Activated naive CD4-positive, alpha-beta T cell treated with anti-CD3 and anti-CD28 coated beads, Interleukin-2, amount 10 ng/mL, durations not matched to agents 7 days and 5 days (primary cell): ENCODE measurements at regions of chr6 and their contacts with region 1.

Region 1: DNA sequence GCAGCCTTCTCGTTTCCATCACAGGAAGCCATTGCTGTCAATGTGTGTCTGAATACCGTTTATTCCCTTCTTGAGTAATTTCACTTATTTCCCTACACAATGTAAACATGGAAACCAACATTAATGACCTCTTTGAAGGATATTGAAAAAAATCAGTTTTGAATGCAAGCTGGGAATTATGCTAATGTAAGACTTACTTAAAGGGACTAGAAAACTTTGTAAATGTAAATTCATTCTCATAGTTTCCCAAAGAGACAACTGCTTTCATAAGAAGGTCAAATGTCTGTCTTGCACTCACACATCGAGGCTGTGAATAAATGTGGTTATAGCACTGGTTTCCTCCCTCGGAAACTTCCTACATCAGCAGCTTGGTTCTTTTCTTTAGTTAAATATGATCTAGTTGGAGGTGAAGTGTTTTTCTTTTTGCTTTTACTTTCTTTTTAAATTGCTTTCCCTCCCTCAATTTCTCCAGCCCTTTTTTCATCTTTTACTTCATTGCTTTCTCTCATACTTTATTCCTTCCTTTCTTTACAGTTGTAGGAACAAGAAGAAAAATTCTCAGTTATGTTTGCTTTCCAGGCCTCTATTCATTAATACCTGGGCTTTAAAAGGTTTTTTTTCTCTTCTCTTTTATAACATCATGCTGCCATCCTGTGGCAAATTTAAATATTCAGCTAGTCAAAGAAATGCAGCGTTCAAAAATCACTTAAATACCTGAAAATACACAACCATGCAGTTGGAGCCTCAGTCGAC is 108.3 kb downstream of the TNFAIP3 start:
- DNase-seq: peak; percentile 29
- H3K4me3 Mint-ChIP-seq: peak overlapping the region; percentile 67
- H3K27ac Mint-ChIP-seq: peak overlapping the region; percentile 95
- H3K4me1 Mint-ChIP-seq: peaks cover 40% of the 10 kb centered on the region
- H3K27me3 Mint-ChIP-seq: no peaks in the 10 kb centered on the region

Region 2: GRCh38 chr6:137823826-137824555 is 151.4 kb before region 1 on chr6:
- CTCF ChIA-PET with region 1: no interaction called
- DNase-seq: peak; percentile 84
- H3K4me3 Mint-ChIP-seq: peak overlapping the region; percentile 58
- H3K27ac Mint-ChIP-seq: peak overlapping the region; percentile 99
- H3K4me1 Mint-ChIP-seq: peaks cover 78% of the 10 kb centered on the region
- H3K27me3 Mint-ChIP-seq: no peaks in the 10 kb centered on the region

Region 3: DNA sequence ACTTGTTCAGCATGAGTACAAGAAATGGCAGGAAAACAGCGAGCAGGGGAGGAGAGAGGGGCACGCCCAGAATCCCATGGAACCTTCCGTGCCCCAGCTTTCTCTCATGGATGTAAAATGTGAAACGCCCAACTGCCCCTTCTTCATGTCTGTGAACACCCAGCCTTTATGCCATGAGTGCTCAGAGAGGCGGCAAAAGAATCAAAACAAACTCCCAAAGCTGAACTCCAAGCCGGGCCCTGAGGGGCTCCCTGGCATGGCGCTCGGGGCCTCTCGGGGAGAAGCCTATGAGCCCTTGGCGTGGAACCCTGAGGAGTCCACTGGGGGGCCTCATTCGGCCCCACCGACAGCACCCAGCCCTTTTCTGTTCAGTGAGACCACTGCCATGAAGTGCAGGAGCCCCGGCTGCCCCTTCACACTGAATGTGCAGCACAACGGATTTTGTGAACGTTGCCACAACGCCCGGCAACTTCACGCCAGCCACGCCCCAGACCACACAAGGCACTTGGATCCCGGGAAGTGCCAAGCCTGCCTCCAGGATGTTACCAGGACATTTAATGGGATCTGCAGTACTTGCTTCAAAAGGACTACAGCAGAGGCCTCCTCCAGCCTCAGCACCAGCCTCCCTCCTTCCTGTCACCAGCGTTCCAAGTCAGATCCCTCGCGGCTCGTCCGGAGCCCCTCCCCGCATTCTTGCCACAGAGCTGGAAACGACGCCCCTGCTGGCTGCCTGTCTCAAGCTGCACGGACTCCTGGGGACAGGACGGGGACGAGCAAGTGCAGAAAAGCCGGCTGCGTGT is 96.7 kb before region 1 on chr6:
- CTCF ChIA-PET with region 1: interaction called, 11 read pairs
- DNase-seq: no peak
- H3K4me3 Mint-ChIP-seq: no peak overlapping the region
- H3K27ac Mint-ChIP-seq: no peak overlapping the region
- H3K4me1 Mint-ChIP-seq: peaks cover 55% of the 10 kb centered on the region
- H3K27me3 Mint-ChIP-seq: no peaks in the 10 kb centered on the region